ENCODE measurements at regions of chr7 and their contacts with region 1.

Region 1: DNA sequence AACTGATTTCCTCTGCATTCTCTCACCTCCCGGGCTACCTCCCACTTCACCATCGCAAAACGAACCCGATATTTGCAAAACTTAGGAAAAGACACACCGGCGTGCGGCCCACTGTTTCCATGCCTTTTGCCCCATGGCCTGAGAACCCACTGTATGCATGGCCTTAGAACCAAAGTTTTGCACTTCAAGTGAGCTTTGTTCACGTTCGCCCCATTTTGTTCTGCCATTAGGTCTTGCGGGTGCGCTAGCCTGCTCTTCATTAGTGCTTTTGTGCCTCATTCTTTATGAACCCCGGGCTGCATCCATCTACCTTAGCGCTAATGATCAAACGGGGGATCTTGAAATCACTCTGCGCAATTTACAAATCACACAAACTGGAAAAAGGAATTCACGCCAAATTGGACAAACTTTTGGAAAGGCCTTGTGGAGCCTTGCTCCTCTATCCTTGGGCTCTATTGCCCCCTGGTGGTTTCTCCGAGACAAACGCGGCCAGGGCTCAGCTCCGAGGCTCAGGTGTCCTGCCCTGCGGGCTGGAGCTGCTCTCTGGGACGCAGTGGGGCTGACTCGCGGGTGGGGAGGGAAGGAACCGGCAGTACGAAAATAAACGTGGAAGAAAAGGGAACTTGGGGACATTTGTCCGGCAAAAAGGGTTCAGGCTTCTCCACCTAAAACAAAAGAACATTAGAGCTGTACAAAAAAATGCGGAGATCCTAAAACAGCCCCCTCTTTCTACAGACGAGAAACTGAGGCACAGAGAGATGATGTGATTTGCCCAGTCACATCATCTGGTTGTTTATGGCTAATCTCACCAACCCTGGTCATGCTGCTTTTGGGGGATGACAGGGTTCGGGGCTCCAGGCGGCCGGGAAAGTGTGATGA is 300.4 kb upstream of the NFE2L3 start:
- DNase-seq: peak; percentile 62 to 89 (median 65)
- ATAC-seq: peak; percentile 63
- H3K4me3 ChIP-seq: no peak overlapping the region
- H3K27ac ChIP-seq: no peak overlapping the region
- H3K4me1 ChIP-seq: peaks cover 11 to 17% of the 10 kb centered on the region in 2 experiments
- H3K27me3 ChIP-seq: no peaks in the 10 kb centered on the region
- CTCF ChIP-seq: peak; percentile 85 to 91 (median 89)
- EP300 ChIP-seq: no peak
- POLR2A ChIP-seq: no peak
- RAD21 ChIP-seq: peak; percentile 95 to 96

Region 2: DNA sequence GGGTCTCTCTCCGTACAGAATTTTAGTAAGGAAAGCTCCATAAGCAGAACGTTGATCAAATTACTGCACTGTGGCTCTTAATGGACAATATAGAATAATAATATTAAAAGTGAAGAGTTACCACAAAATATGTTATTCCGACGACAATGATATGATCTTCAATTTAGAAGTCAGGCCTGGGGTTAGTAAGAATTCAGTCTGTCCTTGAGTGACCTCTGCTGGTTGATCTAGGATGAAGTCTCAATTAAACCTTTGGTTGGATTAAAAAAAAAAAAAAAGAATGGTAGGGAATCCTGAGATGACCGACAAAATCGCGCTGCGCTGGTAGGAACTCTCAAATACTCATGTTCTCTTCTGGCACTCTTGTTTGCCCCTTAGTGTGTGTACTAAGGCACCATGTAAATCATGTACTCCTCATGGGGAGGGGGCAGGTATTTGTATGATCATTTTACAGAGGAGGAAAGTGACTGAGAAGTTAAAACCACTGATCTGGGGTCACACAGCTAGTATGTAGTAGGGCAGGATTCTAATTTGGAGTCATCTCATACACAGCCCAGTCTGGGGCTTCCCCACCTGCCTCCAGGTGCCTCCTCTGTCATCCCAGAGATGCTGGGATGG is 462.0 kb before region 1 on chr7:
- CTCF ChIA-PET with region 1: interaction called, 6 read pairs
- POLR2A ChIA-PET with region 1: no interaction called
- in situ Hi-C with region 1: loop called (anchors 25 kb)
- intact Hi-C with region 1: loop called (anchors 1 kb)
- DNase-seq: peak; percentile 24 to 31 (median 25)
- ATAC-seq: 0 out of 3 replicates have a peak, but pooled peaks have one; percentile 42
- H3K4me3 ChIP-seq: no peak overlapping the region
- H3K27ac ChIP-seq: no peak overlapping the region
- H3K4me1 ChIP-seq: no peaks in the 10 kb centered on the region
- H3K27me3 ChIP-seq: peaks cover 7 to 17% of the 10 kb centered on the region in 2 experiments
- CTCF ChIP-seq: peak in 2 of 3 experiments; percentile 40 to 67; a peak in 4 of 6 replicates
- EP300 ChIP-seq: no peak
- POLR2A ChIP-seq: no peak
- RAD21 ChIP-seq: peak; percentile 65 to 74

Region 3: GRCh38 chr7:25559581-25560367 is 291.8 kb before region 1 on chr7:
- CTCF ChIA-PET with region 1: no interaction called
- POLR2A ChIA-PET with region 1: no interaction called
- in situ Hi-C with region 1: loop called (anchors 5 kb)
- intact Hi-C with region 1: no loop called
- DNase-seq: no peak
- ATAC-seq: no peak
- H3K4me3 ChIP-seq: no peak overlapping the region
- H3K27ac ChIP-seq: no peak overlapping the region
- H3K4me1 ChIP-seq: no peaks in the 10 kb centered on the region
- H3K27me3 ChIP-seq: peaks cover 16 to 50% of the 10 kb centered on the region in 2 experiments; a peak in 4 of 5 replicates
- CTCF ChIP-seq: no peak
- EP300 ChIP-seq: no peak
- POLR2A ChIP-seq: no peak
- RAD21 ChIP-seq: no peak

Region 4: GRCh38 chr7:25720427-25720826 is 131.1 kb before region 1 on chr7:
- CTCF ChIA-PET with region 1: no interaction called
- POLR2A ChIA-PET with region 1: no interaction called
- in situ Hi-C with region 1: no loop called
- intact Hi-C with region 1: loop called (anchors 1 kb)
- DNase-seq: peak in 3 of 4 experiments; percentile 17 to 20 (median 18)
- ATAC-seq: peak; percentile 79
- H3K4me3 ChIP-seq: no peak overlapping the region
- H3K27ac ChIP-seq: no peak overlapping the region
- H3K4me1 ChIP-seq: no peaks in the 10 kb centered on the region
- H3K27me3 ChIP-seq: peaks cover 7 to 12% of the 10 kb centered on the region in 2 experiments; a peak in 4 of 5 replicates
- CTCF ChIP-seq: peak; percentile 45 to 62 (median 61)
- EP300 ChIP-seq: no peak
- POLR2A ChIP-seq: no peak
- RAD21 ChIP-seq: peak; percentile 53 to 78

Region 5: GRCh38 chr7:26365077-26365900 is 513.7 kb after region 1 on chr7:
- CTCF ChIA-PET with region 1: interaction called, 5 read pairs
- POLR2A ChIA-PET with region 1: interaction called, 4 read pairs
- in situ Hi-C with region 1: no loop called
- intact Hi-C with region 1: loop called (anchors 10 kb)
- DNase-seq: peak; percentile 18 to 78 (median 30)
- ATAC-seq: peak; percentile 86
- H3K4me3 ChIP-seq: no peak overlapping the region
- H3K27ac ChIP-seq: no peak overlapping the region
- H3K4me1 ChIP-seq: no peaks in the 10 kb centered on the region; a peak in 1 of 5 replicates
- H3K27me3 ChIP-seq: no peaks in the 10 kb centered on the region
- CTCF ChIP-seq: peak; percentile 70 to 90 (median 71); a peak in 5 of 6 replicates
- EP300 ChIP-seq: no peak
- POLR2A ChIP-seq: no peak
- RAD21 ChIP-seq: peak; percentile 97 to 98